Posterior vena cava (tissue), 2 donors: ENCODE measurements at regions of chr2 and their contacts with region 1.

Region 1: GRCh38 chr2:234969306-234970101 is 17.7 kb downstream of the SH3BP4 start:
- DNase-seq: peak; percentile 44

Region 2: GRCh38 chr2:234991793-234992192 is 22.3 kb after region 1 on chr2:
- intact Hi-C with region 1: loop called in 1 of 2 experiments (anchors 1 kb)
- DNase-seq: no peak

Region 3: DNA sequence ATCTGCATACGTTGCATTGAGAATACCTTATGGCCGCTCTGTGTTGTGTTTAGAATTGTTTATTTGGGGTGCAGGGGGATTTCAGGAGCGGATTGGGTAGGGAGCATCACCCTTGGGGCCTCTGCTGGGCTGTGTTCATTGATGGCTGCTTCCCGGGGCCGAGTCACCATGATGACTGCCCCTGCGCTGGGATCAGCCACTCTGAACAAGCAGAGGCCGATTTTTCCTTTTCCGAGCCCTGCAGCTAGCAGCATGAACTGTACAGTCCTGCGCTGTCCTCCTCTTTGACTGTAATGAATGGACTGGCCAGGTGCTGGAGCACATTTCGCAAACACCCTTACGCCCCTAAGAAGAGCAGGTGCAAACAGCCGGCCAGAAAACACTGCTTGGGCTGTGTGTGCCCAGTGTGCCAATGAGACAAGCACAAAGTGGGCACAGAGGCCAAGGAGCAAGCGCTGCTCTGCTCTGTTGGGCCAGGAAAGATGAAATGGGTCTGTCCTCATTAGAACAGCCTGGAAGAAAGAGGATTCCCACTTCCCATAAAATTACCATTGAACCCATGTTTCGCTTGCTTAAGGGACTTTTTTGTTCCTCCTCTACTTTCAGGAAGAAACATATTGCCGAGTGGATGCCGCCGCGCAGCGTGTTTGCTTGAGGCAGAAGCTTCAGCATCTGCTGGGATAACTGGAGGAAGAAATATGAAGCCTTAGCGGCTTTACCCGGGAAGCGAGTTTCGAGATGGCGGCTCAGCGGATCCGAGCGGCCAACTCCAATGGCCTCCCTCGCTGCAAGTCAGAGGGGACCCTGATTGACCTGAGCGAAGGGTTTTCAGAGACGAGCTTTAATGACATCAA is 65.0 kb after region 1 on chr2:
- intact Hi-C with region 1: no loop called
- DNase-seq: peak; percentile 76

Region 4: GRCh38 chr2:235191978-235192377 is 222.5 kb after region 1 on chr2:
- intact Hi-C with region 1: no loop called
- DNase-seq: no peak